ENCODE measurements at regions of chr5 and their contacts with region 1.

Region 1: DNA sequence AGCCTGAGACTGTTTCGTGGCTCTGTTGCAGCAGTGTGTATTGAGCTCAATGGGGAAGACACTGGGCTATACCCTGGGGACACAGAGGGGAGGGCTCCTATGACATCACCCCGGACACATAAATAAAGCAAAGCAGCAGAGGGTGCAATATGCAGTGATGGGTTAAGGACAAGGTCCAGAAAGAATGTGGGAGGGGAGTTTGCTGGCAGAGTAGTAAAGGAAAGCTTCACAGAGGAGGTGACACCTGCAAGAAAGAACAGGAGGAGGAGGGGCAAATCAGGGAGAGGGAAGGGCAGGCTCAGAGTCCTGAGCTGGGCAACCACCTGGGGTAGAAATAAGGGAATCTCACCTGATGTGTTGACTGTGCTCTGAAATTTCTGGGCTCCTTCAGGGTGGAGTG is 35.3 kb upstream of the CDKN2AIPNL start:
- DNase-seq: no peak
- ATAC-seq: no peak

Region 2: DNA sequence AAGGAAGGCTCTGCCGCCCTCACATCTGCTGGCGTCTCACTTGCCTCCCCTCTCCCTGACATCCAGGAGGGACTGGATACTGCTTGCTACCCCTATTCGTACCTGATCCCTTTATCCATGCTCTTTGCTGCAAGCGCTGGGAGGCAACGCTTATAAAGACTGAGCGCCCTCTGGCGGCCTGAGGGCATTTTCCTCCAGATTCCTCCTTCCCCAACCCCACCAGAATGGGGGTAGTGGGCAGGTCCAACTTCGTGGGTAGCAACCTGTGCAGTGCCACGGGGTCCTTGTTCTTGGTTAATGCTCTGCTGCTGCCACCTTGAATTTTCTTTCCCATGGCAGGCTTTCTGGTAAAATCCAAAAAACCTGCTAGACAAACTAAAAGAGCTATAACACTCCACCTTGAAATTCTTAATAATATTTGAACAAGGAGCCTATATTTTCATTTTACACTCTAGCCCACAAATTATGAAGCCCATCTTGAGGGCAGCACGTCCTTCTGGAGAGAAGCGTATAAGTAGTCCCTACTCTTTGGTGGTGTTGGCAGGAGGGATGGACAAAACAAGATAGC is 130.9 kb after region 1 on chr5:
- intact Hi-C with region 1: loop called (anchors 10 kb)
- DNase-seq: peak; percentile 90
- ATAC-seq: peak; percentile 55